Natural killer cell (primary cell): ENCODE measurements at regions of chr20 and their contacts with region 1.

Region 1: DNA sequence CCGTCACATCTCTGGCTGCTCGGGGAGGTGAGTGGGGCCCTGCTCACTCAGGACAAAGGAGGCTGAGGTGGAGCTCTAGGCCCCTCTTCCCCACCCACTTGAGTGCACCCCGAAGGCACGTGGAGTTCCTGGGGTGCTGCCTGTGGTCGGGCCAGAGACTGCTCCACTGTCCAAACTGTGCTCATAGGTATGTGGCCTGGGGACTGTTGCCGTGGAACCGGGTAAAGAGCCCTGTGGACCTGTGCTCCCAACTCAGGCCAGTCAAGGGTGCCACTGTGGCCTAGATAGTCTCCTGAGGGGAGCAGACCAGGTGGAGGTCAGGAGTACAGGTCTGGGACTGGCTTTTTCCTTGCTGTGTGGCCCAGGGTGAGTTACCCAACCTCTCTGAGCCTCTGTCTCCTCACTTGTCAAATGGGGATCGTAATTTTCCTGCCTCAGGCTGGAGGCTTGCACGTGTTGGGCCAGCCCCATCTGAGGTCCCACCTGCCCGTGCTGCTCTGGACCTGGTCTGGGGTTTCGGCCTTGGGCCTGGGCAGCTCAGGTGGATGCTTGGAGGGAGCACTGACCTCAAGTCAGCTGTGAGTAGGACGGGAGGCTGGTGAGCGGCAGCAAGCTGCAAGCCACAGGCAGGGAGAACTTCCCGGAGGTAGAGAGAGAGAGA is 12.4 kb upstream of the NPBWR2 start:
- DNase-seq: peak in 1 of 2 donors; percentile 31
- ATAC-seq: peak in 1 of 3 donors; percentile 23
- H3K4me3 ChIP-seq: no peak overlapping the region
- H3K4me3 Mint-ChIP-seq: peak overlapping the region; percentile 77
- H3K27ac ChIP-seq: no peak overlapping the region
- H3K27ac Mint-ChIP-seq: peak overlapping the region; percentile 78 to 91
- H3K4me1 ChIP-seq: peaks cover 10% of the 10 kb centered on the region
- H3K4me1 Mint-ChIP-seq: peaks cover 8% of the 10 kb centered on the region in 2 donors
- H3K27me3 ChIP-seq: peaks cover 5% of the 10 kb centered on the region
- H3K27me3 Mint-ChIP-seq: peaks cover 9 to 14% of the 10 kb centered on the region in 2 donors
- CTCF ChIP-seq: no peak

Region 2: GRCh38 chr20:63537525-63538203 is 582.1 kb before region 1 on chr20:
- intact Hi-C with region 1: loop called (anchors 2 kb)
- DNase-seq: peak; percentile 95 to 98
- ATAC-seq: peak; percentile 93 to 97 (median 93)
- H3K4me3 ChIP-seq: peak overlapping the region; percentile 42
- H3K4me3 Mint-ChIP-seq: peak overlapping the region; percentile 80
- H3K27ac ChIP-seq: peak overlapping the region; percentile 88
- H3K27ac Mint-ChIP-seq: peak overlapping the region; percentile 77 to 91
- H3K4me1 ChIP-seq: peaks cover 32% of the 10 kb centered on the region
- H3K4me1 Mint-ChIP-seq: peaks cover 0 to 20% of the 10 kb centered on the region in 2 donors
- H3K27me3 ChIP-seq: no peaks in the 10 kb centered on the region
- H3K27me3 Mint-ChIP-seq: no peaks in the 10 kb centered on the region
- CTCF ChIP-seq: peak; percentile 99

Region 3: GRCh38 chr20:63664861-63665716 is 454.7 kb before region 1 on chr20:
- intact Hi-C with region 1: no loop called
- DNase-seq: no peak
- ATAC-seq: no peak
- H3K4me3 ChIP-seq: no peak overlapping the region
- H3K4me3 Mint-ChIP-seq: no peak overlapping the region
- H3K27ac ChIP-seq: no peak overlapping the region
- H3K27ac Mint-ChIP-seq: no peak overlapping the region
- H3K4me1 ChIP-seq: no peaks in the 10 kb centered on the region
- H3K4me1 Mint-ChIP-seq: no peaks in the 10 kb centered on the region
- H3K27me3 ChIP-seq: no peaks in the 10 kb centered on the region
- H3K27me3 Mint-ChIP-seq: no peaks in the 10 kb centered on the region
- CTCF ChIP-seq: no peak

Region 4: GRCh38 chr20:63785691-63786131 is 334.1 kb before region 1 on chr20:
- intact Hi-C with region 1: loop called (anchors 5 kb)
- DNase-seq: no peak
- ATAC-seq: no peak
- H3K4me3 ChIP-seq: no peak overlapping the region
- H3K4me3 Mint-ChIP-seq: no peak overlapping the region
- H3K27ac ChIP-seq: no peak overlapping the region
- H3K27ac Mint-ChIP-seq: no peak overlapping the region
- H3K4me1 ChIP-seq: peaks cover 7% of the 10 kb centered on the region
- H3K4me1 Mint-ChIP-seq: no peaks in the 10 kb centered on the region
- H3K27me3 ChIP-seq: no peaks in the 10 kb centered on the region
- H3K27me3 Mint-ChIP-seq: peaks cover 0 to 3% of the 10 kb centered on the region in 2 donors
- CTCF ChIP-seq: no peak

Region 5: DNA sequence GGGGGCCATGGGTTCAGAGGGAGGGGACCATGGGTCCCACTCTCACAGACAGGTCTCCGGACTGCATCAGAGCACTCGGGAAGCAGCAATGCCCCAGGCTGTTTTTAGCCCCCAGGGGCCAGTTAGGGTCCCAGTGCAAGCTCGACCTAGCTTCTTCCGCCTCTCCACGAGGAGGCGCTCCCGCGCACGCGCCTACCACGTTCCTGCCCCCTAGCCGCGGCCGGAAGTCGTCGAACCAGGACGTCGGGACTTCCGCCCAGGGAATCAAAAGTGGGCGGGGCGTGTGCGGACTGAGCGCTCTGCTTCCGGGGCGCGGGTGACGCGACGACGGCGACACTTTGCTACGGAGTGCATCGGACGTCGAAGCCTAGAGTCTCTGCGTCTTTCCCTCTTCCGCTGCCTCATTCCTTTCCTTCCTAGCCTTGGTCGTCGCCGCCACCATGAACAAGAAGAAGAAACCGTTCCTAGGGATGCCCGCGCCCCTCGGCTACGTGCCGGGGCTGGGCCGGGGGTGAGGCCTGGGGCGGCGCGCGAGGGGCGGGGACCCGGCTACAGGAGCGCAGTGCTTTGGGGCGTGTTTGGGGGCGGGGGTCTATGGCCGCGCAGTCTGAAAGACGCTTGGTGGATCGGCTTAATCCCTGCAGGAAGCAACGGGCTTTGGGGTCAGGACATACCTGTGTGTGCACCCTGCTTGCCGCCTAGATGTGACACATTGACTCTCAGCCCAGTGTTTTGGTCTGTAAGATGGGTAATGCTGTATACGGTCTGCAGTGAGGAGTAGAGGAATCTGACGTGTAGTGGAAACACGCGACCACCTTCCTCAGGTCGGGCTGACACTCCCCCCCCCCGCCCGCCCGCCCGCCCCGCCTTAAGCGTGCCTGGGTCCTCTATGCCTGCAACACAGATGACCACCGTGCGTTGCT is 138.7 kb before region 1 on chr20 and contains the start of gene PRPF6:
- intact Hi-C with region 1: loop called (anchors 2 kb)
- DNase-seq: peak; percentile 92 to 99
- ATAC-seq: peak; percentile 61 to 86 (median 77)
- H3K4me3 ChIP-seq: peak within 1 kb of the TSS; percentile 62
- H3K4me3 Mint-ChIP-seq: peak within 1 kb of the TSS; percentile 95
- H3K27ac ChIP-seq: peak within 1 kb of the TSS; percentile 78
- H3K27ac Mint-ChIP-seq: peak within 1 kb of the TSS; percentile 88 to 95
- H3K4me1 ChIP-seq: peaks cover 54% of the 10 kb centered on the region
- H3K4me1 Mint-ChIP-seq: peaks cover 59 to 67% of the 10 kb centered on the region in 2 donors
- H3K27me3 ChIP-seq: no peaks in the 10 kb centered on the region
- H3K27me3 Mint-ChIP-seq: no peaks in the 10 kb centered on the region
- CTCF ChIP-seq: peak; percentile 90
- total RNA-seq, gene PRPF6: 52.7 to 63.0 (median 55.0) TPM

Region 6: DNA sequence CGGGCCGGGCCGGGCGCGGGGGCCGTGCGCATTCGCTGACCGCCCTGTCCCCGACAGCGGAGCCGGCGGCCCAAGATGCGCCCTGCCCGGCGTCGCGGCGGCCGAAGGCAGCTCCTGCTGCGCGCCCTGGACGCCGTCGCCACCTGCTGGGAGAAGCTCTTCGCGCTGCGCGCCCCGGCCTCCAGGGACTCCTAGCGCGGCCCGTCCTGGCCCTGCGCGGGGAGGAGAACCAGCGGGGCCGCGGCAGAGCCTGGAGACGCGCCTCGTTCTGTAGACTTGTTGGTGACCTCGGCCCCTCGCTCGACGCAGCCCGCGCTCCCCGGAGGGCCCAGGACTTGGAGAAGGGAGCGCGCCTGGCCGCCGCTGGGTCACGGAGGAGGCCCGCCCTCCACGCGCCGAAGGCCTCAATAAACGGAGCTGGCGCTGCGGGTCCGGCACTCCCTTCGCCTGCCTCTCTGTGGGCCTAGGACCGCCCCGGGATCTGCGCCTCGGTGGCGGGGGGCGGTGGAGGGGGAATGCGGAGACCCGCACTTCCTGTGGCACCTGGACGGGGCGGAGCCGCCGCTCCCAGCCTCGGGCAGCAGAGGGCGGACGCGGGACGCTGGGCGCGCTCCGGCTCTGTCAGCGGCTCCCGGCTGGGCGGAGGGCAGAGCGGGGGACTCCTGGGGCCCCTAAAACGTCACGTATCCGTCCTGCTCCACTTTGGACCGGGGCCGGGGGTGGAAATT is 81.1 kb before region 1 on chr20:
- intact Hi-C with region 1: loop called (anchors 1 kb)
- DNase-seq: peak; percentile 66 to 86
- ATAC-seq: peak; percentile 81 to 89 (median 84)
- H3K4me3 ChIP-seq: peak overlapping the region; percentile 48
- H3K4me3 Mint-ChIP-seq: peak overlapping the region; percentile 79
- H3K27ac ChIP-seq: no peak overlapping the region
- H3K27ac Mint-ChIP-seq: no peak overlapping the region
- H3K4me1 ChIP-seq: peaks cover 73% of the 10 kb centered on the region
- H3K4me1 Mint-ChIP-seq: peaks cover 5 to 15% of the 10 kb centered on the region in 2 donors
- H3K27me3 ChIP-seq: peaks cover 36% of the 10 kb centered on the region
- H3K27me3 Mint-ChIP-seq: peaks cover 7 to 17% of the 10 kb centered on the region in 2 donors
- CTCF ChIP-seq: peak; percentile 71

Region 7: GRCh38 chr20:64083378-64083803 is 36.4 kb before region 1 on chr20:
- intact Hi-C with region 1: loop called (anchors 2 kb)
- DNase-seq: peak; percentile 53 to 82
- ATAC-seq: peak; percentile 42 to 47 (median 46)
- H3K4me3 ChIP-seq: no peak overlapping the region
- H3K4me3 Mint-ChIP-seq: peak overlapping the region; percentile 79
- H3K27ac ChIP-seq: no peak overlapping the region
- H3K27ac Mint-ChIP-seq: no peak overlapping the region
- H3K4me1 ChIP-seq: peaks cover 38% of the 10 kb centered on the region
- H3K4me1 Mint-ChIP-seq: peaks cover 15 to 38% of the 10 kb centered on the region in 2 donors
- H3K27me3 ChIP-seq: peaks cover 12% of the 10 kb centered on the region
- H3K27me3 Mint-ChIP-seq: peaks cover 18 to 19% of the 10 kb centered on the region in 2 donors
- CTCF ChIP-seq: peak; percentile 53

Region 8: DNA sequence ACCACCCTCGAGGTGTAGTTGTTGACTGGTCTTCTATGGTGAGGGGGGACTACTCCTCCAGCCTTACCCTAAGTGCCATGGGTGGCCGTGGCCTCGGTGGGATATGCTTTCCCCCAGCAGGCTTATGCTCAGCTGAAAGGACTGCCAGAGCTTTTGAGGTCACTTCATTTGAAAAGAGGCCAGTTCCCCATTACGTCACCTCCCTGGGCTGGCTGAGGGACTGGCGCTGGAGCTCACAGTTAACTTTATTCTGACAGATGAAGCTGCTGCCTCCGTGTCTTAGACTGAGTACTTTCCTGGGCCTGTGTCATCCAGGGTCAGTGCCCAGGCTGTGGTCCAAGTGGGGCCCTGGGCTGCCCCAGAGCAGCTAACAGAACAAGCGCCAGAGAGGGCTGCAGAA is 92.9 kb after region 1 on chr20:
- intact Hi-C with region 1: no loop called
- DNase-seq: no peak
- ATAC-seq: no peak
- H3K4me3 ChIP-seq: no peak overlapping the region
- H3K4me3 Mint-ChIP-seq: no peak overlapping the region
- H3K27ac ChIP-seq: no peak overlapping the region
- H3K27ac Mint-ChIP-seq: no peak overlapping the region
- H3K4me1 ChIP-seq: no peaks in the 10 kb centered on the region
- H3K4me1 Mint-ChIP-seq: peaks cover 0 to 5% of the 10 kb centered on the region in 2 donors
- H3K27me3 ChIP-seq: no peaks in the 10 kb centered on the region
- H3K27me3 Mint-ChIP-seq: no peaks in the 10 kb centered on the region
- CTCF ChIP-seq: no peak